Tibial artery (tissue), 4 donors: ENCODE measurements at regions of chr5 and their contacts with region 1.

Region 1: DNA sequence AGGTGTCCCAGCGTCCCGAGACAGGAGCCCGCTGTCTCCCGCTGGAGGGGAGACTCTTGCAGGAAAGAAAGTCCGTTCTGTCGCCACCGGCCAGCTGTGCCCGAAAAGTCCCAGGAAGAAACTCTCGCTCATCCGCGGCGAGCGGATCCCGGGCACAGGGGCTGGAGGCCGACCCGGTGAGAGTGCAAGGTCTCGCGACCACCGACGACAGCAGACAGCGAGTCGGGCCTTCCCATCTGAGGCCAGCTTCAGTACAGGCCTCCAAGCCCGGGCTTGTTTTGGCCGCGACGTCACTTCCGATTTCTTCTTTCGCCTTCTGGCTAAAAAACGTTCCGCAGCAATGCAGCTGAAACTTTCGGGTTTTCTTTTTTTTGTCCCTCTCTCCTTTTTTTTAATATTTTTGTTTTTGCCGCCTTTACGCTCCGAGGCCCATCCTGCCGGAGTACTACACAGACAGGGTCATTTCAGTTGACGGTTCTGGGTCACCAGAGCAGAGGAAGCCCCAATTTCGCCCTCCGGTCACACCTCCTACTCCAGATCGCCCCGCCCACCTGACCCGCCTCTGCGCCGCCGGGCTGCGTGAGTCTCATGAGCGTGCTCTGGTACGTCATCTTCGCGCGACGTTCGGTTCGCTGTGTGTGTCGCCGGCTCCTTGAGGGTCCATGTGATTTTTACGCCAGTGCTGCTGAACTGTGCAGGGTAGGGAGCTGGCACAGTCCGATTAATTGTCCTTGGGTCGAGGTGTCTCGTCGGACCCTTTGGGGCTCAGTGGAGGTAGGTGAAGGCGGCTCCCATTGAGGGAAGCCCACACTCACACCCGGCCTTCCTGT is at the starts of genes ANKRA2 and UTP15:
- DNase-seq: peak; percentile 99
- H3K4me3 ChIP-seq: peak within 1 kb of the TSS; percentile 69 to 74
- H3K27ac ChIP-seq: peak within 1 kb of the TSS; percentile 91 to 95
- H3K4me1 ChIP-seq: peaks cover 0 to 29% (median 17%) of the 10 kb centered on the region in 4 donors
- H3K27me3 ChIP-seq: no peaks in the 10 kb centered on the region
- CTCF ChIP-seq: no peak

Region 2: GRCh38 chr5:73513960-73514359 is 51.4 kb before region 1 on chr5:
- intact Hi-C with region 1: loop called (anchors 5 kb)
- DNase-seq: no peak
- H3K4me3 ChIP-seq: no peak overlapping the region
- H3K27ac ChIP-seq: no peak overlapping the region
- H3K4me1 ChIP-seq: peaks cover 0 to 3% (median 0%) of the 10 kb centered on the region in 4 donors
- H3K27me3 ChIP-seq: no peaks in the 10 kb centered on the region
- CTCF ChIP-seq: no peak

Region 3: DNA sequence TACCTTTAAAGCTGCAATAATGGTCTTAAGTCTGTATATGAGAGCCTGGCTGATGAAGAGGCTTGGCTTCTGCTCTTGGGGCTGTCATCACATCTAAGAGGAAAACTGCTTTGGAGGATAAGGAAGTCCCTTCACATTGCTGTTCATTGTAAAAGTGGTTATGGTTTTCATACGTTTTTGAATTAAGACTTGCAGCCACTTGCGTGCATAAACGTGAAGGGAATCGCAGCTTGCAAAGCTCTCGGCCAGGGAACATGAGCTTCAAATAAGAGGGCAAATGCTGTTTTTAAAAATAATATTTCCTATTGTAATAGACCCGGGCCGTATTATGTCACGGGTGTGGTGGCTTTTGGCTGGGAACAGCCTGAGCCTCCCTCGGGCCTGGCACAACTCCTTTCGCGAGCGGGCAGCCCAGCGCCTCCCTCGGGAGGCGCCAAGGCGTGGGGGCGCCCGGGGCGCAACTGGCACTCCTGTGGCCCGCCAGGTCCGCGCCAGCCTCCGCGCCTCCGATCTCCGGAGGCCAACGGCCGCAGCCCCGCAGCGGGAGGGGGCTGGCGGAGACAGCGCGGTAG is 60.1 kb after region 1 on chr5:
- intact Hi-C with region 1: no loop called
- DNase-seq: no peak
- H3K4me3 ChIP-seq: peak overlapping the region; percentile 67
- H3K27ac ChIP-seq: peak overlapping the region; percentile 67 to 81
- H3K4me1 ChIP-seq: peaks cover 0 to 26% (median 0%) of the 10 kb centered on the region in 4 donors
- H3K27me3 ChIP-seq: no peaks in the 10 kb centered on the region
- CTCF ChIP-seq: no peak

Region 4: GRCh38 chr5:73838901-73839300 is 273.5 kb after region 1 on chr5:
- intact Hi-C with region 1: no loop called
- DNase-seq: no peak
- H3K4me3 ChIP-seq: no peak overlapping the region
- H3K27ac ChIP-seq: no peak overlapping the region
- H3K4me1 ChIP-seq: no peaks in the 10 kb centered on the region
- H3K27me3 ChIP-seq: no peaks in the 10 kb centered on the region
- CTCF ChIP-seq: no peak